ENCODE measurements at regions of chr1 and their contacts with region 1.

Region 1: DNA sequence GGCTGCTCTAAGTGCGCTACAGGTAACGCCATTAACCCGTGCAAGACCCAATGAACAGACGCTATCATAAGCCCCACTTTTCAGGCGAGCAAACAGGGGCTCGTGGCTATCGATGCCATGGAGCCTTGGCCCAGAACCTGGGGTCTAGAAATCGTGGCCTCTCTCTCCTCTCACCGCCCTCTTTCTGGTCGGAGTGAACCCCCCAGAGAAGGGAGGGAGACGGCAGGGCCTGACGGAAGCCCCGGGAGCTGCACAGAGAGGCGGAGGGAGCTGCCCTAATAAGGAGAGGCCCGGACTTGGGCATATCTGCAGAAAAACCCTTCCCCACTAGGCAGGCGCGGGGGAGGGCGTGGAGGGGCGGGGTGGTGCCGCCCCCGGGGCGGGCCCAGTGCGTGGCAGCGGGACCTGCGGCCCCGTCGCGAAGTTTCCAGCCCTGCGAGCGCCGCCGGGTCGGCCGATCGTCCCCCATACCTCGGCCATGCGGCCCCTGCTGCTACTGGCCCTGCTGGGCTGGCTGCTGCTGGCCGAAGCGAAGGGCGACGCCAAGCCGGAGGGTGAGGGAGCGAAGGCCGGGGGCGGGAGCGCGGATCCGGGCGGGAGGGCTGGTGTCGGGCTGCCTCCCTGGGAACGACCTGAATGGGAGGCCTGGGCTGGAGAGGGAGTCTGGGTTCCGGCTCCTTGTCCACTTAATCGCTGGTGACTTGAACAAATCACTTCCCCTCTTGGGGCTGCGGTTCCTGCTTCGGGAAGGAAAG is at the start of gene PLOD1:
- DNase-seq: peak; percentile 38 to 74
- H3K4me3 ChIP-seq: peak within 1 kb of the TSS; percentile 63
- H3K27ac ChIP-seq: no peak within 1 kb of the TSS
- H3K4me1 ChIP-seq: 0 out of 2 replicates have a peak, but pooled peaks cover 5% of the 10 kb centered on the region
- H3K27me3 ChIP-seq: no peaks in the 10 kb centered on the region
- CTCF ChIP-seq: no peak
- total RNA-seq, gene PLOD1: 64.1 and 65.0 TPM in 2 replicates

Region 2: DNA sequence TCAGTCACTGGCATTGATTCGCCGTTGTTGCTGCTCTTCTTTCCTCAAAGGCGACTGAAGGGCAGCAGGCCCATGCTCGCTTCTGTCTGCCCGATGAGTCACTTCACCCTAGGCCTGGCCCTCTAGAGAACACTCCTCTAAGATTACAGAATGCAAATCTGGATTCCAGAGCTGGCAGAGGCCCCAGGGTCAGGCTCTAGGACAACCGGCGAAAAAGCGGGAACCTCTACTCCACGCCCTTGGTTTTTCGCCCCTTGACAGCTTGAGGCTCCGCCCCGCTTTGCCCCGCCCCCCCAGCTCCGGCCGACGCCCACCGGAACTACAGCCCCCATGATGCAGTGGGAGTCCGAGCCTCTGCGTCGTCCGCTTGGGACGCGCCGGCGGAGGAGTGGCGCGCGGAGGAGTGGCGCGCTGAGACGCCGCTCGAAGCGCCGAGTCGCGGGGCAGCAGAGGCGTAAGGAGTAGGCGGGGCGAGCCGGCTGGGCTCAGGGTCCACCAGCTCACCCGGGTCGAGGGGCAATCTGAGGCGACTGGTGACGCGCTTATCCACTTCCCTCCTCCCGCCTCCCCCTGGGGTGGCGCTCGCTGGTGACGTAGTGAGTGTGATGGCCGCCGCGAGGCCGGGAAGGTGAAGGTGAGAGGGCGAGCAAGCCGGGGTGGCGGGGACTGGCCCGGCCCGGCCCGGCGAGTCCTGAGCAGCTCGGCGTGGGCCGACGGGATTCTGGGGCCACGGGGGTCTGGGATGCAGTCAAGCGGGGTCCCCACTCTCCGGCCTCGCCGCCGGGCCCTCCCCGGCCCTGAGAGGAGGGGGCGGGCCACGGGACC is 45.6 kb after region 1 on chr1 and contains the start of gene MFN2:
- CTCF ChIA-PET with region 1: no interaction called
- POLR2A ChIA-PET with region 1: interaction called, 3 read pairs
- intact Hi-C with region 1: loop called (anchors 5 kb)
- DNase-seq: peak; percentile 83 to 94
- H3K4me3 ChIP-seq: peak within 1 kb of the TSS; percentile 85
- H3K27ac ChIP-seq: peak within 1 kb of the TSS; percentile 74
- H3K4me1 ChIP-seq: peaks cover 29% of the 10 kb centered on the region
- H3K27me3 ChIP-seq: no peaks in the 10 kb centered on the region
- CTCF ChIP-seq: no peak
- total RNA-seq, gene MFN2: 54.2 and 72.6 TPM in 2 replicates

Measured in PC-9 (cell line).